Tibial artery (tissue), 4 donors: ENCODE measurements at regions of chr3 and their contacts with region 1.

Region 1: GRCh38 chr3:43690400-43691119 is at the start of gene ABHD5:
- DNase-seq: peak; percentile 85 to 94
- H3K4me3 ChIP-seq: peak within 1 kb of the TSS; percentile 65 to 66
- H3K27ac ChIP-seq: peak within 1 kb of the TSS; percentile 83
- H3K4me1 ChIP-seq: peaks cover 0 to 28% (median 16%) of the 10 kb centered on the region in 4 donors
- H3K27me3 ChIP-seq: no peaks in the 10 kb centered on the region
- CTCF ChIP-seq: peak in 1 of 2 experiments; percentile 5

Region 2: GRCh38 chr3:43621656-43622432 is 68.7 kb before region 1 on chr3 and contains the start of gene ANO10:
- intact Hi-C with region 1: loop called (anchors 5 kb)
- DNase-seq: peak; percentile 99
- H3K4me3 ChIP-seq: peak within 1 kb of the TSS; percentile 72 to 97
- H3K27ac ChIP-seq: peak within 1 kb of the TSS; percentile 84 to 97
- H3K4me1 ChIP-seq: peaks cover 0 to 26% (median 13%) of the 10 kb centered on the region in 4 donors
- H3K27me3 ChIP-seq: no peaks in the 10 kb centered on the region
- CTCF ChIP-seq: no peak

Region 3: GRCh38 chr3:43769471-43770425 is 79.2 kb after region 1 on chr3:
- intact Hi-C with region 1: loop called (anchors 10 kb)
- DNase-seq: peak; percentile 99
- H3K4me3 ChIP-seq: peak overlapping the region; percentile 33 to 44
- H3K27ac ChIP-seq: peak overlapping the region; percentile 79 to 83
- H3K4me1 ChIP-seq: peaks cover 0 to 43% (median 33%) of the 10 kb centered on the region in 4 donors
- H3K27me3 ChIP-seq: no peaks in the 10 kb centered on the region
- CTCF ChIP-seq: peak; percentile 91 to 94

Region 4: GRCh38 chr3:43919029-43919428 is 228.5 kb after region 1 on chr3:
- intact Hi-C with region 1: no loop called
- DNase-seq: no peak
- H3K4me3 ChIP-seq: no peak overlapping the region
- H3K27ac ChIP-seq: no peak overlapping the region
- H3K4me1 ChIP-seq: no peaks in the 10 kb centered on the region
- H3K27me3 ChIP-seq: peaks cover 0 to 29% of the 10 kb centered on the region in 2 donors
- CTCF ChIP-seq: no peak